HEK293 (cell line): ENCODE measurements at regions of chr7 and their contacts with region 1.

Region 1: DNA sequence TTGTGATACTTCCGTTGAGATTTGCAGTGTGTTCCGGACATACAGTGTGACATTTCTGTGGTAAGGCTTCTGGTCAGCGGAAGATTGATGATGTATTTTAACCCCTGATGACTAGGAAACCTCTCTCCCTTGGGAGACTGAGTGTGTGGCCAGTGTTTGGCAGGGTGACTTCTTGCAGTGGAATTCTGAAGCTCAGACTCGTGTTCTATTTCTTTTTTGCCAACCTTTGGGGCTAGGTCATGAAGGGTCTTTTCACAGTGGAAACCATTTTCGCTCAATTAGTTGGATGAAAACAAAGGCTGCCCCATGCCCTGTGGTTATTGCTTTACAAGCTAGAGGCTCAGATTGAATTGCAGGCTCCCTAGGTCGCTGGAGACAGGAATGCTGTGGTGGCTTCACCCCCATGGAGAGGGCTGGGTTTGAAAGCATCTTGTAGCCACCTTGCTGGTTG is 288.9 kb downstream of the BBS9 start:
- H3K4me3 ChIP-seq: no peak overlapping the region
- H3K27ac ChIP-seq: no peak overlapping the region
- H3K4me1 ChIP-seq: 0 out of 2 replicates have a peak, but pooled peaks cover 4% of the 10 kb centered on the region
- CTCF ChIP-seq: no peak

Region 2: DNA sequence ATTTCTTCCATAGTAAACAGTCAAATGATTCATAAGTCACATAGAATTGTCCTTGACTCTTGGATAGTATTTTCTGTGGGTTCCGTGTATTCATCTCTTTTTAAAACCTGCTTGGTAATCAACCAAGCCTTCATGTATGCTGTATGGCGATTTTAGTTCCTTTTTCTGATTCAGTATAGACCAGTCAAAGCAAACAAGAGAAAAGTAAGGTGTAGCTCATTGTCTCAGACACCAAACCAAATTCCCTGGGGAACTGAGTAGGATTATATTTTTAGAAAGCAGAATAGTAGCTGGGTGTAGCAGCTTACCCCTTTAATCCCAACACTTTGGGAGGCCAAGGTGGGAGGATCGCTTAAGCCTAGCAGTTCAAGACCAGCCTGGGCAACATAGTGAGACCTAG is 48.4 kb before region 1 on chr7:
- CTCF ChIA-PET with region 1: no interaction called
- POLR2A ChIA-PET with region 1: interaction called, 10 read pairs
- H3K4me3 ChIP-seq: no peak overlapping the region
- H3K27ac ChIP-seq: no peak overlapping the region
- H3K4me1 ChIP-seq: no peaks in the 10 kb centered on the region
- CTCF ChIP-seq: no peak

Region 3: DNA sequence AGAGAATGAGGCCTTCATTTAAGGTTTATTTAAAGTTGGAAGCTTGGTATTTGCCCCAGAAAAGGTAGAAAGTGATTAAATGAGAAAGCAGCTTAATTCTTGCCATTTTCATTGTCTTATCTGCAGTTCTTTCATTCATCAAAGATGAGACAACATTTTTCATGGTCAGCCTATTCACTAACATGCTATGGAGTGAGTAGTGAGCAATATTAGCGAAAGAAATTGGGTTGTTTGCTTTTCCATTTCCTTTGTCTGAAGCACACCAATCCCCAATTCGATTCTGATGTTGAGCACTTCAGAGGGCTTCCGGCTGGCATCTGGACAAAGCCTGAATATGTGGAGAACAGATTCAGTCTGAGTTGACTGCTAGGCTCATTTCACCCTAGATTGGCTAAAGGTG is 28.3 kb after region 1 on chr7:
- CTCF ChIA-PET with region 1: no interaction called
- POLR2A ChIA-PET with region 1: no interaction called
- H3K4me3 ChIP-seq: no peak overlapping the region
- H3K27ac ChIP-seq: no peak overlapping the region
- H3K4me1 ChIP-seq: no peaks in the 10 kb centered on the region; the same call in 1 of the 2 replicates
- CTCF ChIP-seq: no peak